Naive thymus-derived CD4-positive, alpha-beta T cell (primary cell): ENCODE measurements at regions of chr20 and their contacts with region 1.

Region 1: GRCh38 chr20:13784893-13785715 is at the starts of genes ESF1 and NDUFAF5:
- DNase-seq: peak; percentile 71 to 93 (median 90)
- ATAC-seq: peak; percentile 99
- H3K4me3 ChIP-seq: peak within 1 kb of the TSS; percentile 83
- H3K4me3 Mint-ChIP-seq: peak within 1 kb of the TSS; percentile 92 to 100 (median 99)
- H3K27ac ChIP-seq: peak within 1 kb of the TSS; percentile 91
- H3K27ac Mint-ChIP-seq: peak within 1 kb of the TSS; percentile 91 to 98 (median 96)
- H3K4me1 ChIP-seq: peaks cover 14 to 21% of the 10 kb centered on the region in 2 donors
- H3K4me1 Mint-ChIP-seq: peaks cover 32 to 85% (median 69%) of the 10 kb centered on the region in 7 donors
- H3K27me3 ChIP-seq: no peaks in the 10 kb centered on the region
- H3K27me3 Mint-ChIP-seq: peaks cover 0 to 2% (median 0%) of the 10 kb centered on the region in 5 donors
- total RNA-seq, gene ESF1: 7.9 to 16.9 (median 14.5) TPM
- total RNA-seq, gene NDUFAF5: 23.8 to 43.6 (median 28.9) TPM

Region 2: DNA sequence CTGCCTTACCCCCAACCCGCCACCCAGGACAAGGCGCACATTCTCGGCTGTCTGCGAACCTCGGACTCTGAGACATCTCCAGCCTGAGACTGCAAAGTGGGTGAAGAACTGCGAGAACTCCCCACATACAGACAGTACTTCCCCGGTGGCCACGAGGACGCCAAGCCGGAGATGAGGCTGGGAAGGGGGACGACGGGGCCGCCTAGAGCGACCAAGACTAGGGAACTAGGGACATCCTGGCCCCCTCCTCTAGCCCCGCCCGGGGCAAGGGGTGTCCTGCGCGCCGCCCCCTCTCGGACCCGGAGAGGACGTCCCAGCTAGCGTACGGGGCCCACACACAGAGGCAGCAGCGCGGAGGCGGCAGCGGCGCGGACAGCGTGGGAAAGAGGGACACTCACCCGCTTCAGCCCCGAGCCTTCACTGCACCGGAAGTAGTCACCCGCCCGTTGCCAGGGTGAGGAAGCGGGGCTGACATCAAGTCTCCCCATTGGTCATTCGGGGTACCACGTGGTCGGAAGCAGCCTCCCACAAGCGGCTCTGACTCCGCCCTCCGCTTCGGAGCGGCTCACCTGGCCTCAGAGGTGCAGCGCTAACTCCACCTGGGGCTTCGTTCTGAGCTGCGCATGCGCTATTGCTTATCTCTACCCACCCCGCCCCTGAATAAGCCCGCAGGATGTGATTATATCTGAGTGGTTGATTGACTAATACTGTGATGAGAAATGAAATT is 146.4 kb before region 1 on chr20 and contains the start of gene TASP1:
- CTCF ChIA-PET with region 1: no interaction called
- POLR2A ChIA-PET with region 1: interaction called, 3 read pairs
- intact Hi-C with region 1: loop called (anchors 1 kb)
- DNase-seq: peak; percentile 90 to 98 (median 96)
- ATAC-seq: peak; percentile 100
- H3K4me3 ChIP-seq: peak within 1 kb of the TSS; percentile 71
- H3K4me3 Mint-ChIP-seq: peak within 1 kb of the TSS; percentile 85 to 94 (median 90)
- H3K27ac ChIP-seq: peak within 1 kb of the TSS; percentile 76
- H3K27ac Mint-ChIP-seq: peak within 1 kb of the TSS; percentile 37 to 95 (median 83)
- H3K4me1 ChIP-seq: peaks cover 0 to 7% of the 10 kb centered on the region in 2 donors
- H3K4me1 Mint-ChIP-seq: peaks cover 7 to 36% (median 27%) of the 10 kb centered on the region in 7 donors
- H3K27me3 ChIP-seq: no peaks in the 10 kb centered on the region
- H3K27me3 Mint-ChIP-seq: peaks cover 0 to 10% (median 3%) of the 10 kb centered on the region in 5 donors
- total RNA-seq, gene TASP1: 10.6 to 14.3 (median 13.3) TPM

Region 3: DNA sequence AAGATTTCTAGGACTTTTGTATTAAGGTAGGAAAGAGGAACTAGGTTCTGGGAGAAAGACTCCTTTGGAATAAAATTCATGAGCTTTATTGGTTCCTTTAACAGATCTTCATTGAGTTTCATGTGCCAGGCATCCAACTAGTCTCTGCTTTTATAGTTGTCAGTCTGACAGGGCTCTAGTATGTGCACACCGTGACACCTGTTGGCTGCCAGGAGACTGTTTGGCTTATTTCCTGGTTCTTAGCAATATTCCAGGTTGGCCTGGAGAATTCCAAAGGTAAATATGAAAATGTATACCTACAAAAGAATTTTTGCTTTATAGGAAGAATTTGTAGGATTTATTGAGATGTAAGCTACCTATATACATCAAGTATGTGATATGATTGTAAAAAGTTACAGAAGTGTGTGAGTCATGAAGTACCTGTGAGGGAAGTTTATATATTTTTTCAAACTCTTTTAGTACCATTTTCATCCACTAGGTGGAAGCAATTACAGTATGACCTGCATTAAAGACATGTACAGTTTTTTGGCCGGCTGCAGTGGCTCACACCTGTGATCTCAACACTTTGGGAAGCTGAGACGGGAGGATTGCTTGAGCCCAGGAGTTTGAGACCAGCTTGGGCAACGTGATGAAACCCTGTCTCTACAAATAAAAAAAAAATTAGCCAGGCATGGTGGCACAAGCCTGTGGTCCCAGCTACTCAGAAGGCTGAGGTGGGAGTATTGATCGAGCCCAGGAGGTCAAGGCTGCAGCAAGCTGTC is 35.0 kb after region 1 on chr20:
- CTCF ChIA-PET with region 1: no interaction called
- POLR2A ChIA-PET with region 1: no interaction called
- intact Hi-C with region 1: no loop called
- DNase-seq: peak in 5 of 9 donors; percentile 18 to 36 (median 24)
- ATAC-seq: peak; percentile 71
- H3K4me3 ChIP-seq: no peak overlapping the region
- H3K4me3 Mint-ChIP-seq: no peak overlapping the region
- H3K27ac ChIP-seq: peak overlapping the region; percentile 8
- H3K27ac Mint-ChIP-seq: no peak overlapping the region
- H3K4me1 ChIP-seq: no peaks in the 10 kb centered on the region
- H3K4me1 Mint-ChIP-seq: peaks cover 0 to 3% (median 0%) of the 10 kb centered on the region in 7 donors
- H3K27me3 ChIP-seq: no peaks in the 10 kb centered on the region
- H3K27me3 Mint-ChIP-seq: no peaks in the 10 kb centered on the region

Region 4: DNA sequence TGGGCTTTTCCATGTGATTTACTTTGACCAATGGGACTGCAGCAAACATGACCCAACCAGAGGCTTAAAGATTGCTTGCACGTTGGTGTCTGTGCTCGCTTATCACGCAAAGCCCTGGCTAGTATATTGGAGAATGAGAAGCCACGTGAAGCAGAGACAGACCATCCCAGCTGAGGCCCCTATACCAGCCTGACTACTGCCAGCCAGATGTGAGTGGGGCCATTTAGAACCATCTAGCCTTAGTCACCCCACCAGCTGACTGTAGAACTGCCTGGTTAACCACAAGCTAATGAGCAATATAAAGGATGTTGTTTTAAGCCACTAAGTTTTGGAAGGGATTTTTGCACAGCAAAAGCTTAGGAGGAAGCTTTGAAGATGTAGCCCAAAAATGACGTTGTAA is 284.7 kb after region 1 on chr20:
- CTCF ChIA-PET with region 1: no interaction called
- POLR2A ChIA-PET with region 1: no interaction called
- intact Hi-C with region 1: no loop called
- DNase-seq: no peak
- ATAC-seq: no peak
- H3K4me3 ChIP-seq: no peak overlapping the region
- H3K4me3 Mint-ChIP-seq: no peak overlapping the region
- H3K27ac ChIP-seq: no peak overlapping the region
- H3K27ac Mint-ChIP-seq: no peak overlapping the region
- H3K4me1 ChIP-seq: no peaks in the 10 kb centered on the region
- H3K4me1 Mint-ChIP-seq: no peaks in the 10 kb centered on the region
- H3K27me3 ChIP-seq: no peaks in the 10 kb centered on the region
- H3K27me3 Mint-ChIP-seq: no peaks in the 10 kb centered on the region